T-cell (primary cell): ENCODE measurements at regions of chr13 and their contacts with region 1.

Region 1: GRCh38 chr13:44936246-44936645 is 53.0 kb downstream of the NUFIP1 start:
- DNase-seq: no peak
- ATAC-seq: no peak
- H3K4me3 ChIP-seq: no peak overlapping the region
- H3K4me3 Mint-ChIP-seq: no peak overlapping the region
- H3K27ac ChIP-seq: no peak overlapping the region
- H3K27ac Mint-ChIP-seq: no peak overlapping the region
- H3K4me1 ChIP-seq: no peaks in the 10 kb centered on the region
- H3K4me1 Mint-ChIP-seq: no peaks in the 10 kb centered on the region
- H3K27me3 ChIP-seq: no peaks in the 10 kb centered on the region
- H3K27me3 Mint-ChIP-seq: peaks cover 2 to 4% of the 10 kb centered on the region in 2 donors

Region 2: GRCh38 chr13:45297456-45298205 is 361.4 kb after region 1 on chr13:
- CTCF ChIA-PET with region 1: no interaction called
- POLR2A ChIA-PET with region 1: interaction called in 1 of 2 experiments, 10 read pairs
- DNase-seq: peak in 10 of 35 experiments; percentile 5 to 48 (median 9)
- ATAC-seq: peak; percentile 75 to 86 (median 80)
- H3K4me3 ChIP-seq: no peak overlapping the region
- H3K4me3 Mint-ChIP-seq: peak overlapping the region in 1 of 3 donors; percentile 53
- H3K27ac ChIP-seq: peak overlapping the region; percentile 49
- H3K27ac Mint-ChIP-seq: peak overlapping the region; percentile 87 to 93
- H3K4me1 ChIP-seq: peaks cover 22 to 40% of the 10 kb centered on the region in 2 experiments
- H3K4me1 Mint-ChIP-seq: peaks cover 41 to 49% (median 43%) of the 10 kb centered on the region in 3 donors
- H3K27me3 ChIP-seq: no peaks in the 10 kb centered on the region
- H3K27me3 Mint-ChIP-seq: peaks cover 0 to 2% of the 10 kb centered on the region in 2 donors